ENCODE measurements at regions of chr13 and their contacts with region 1.

Region 1: GRCh38 chr13:39684531-39685137 is 29.2 kb downstream of the COG6 start:
- DNase-seq: peak in 3 of 14 experiments; percentile 40 to 51 (median 48)
- ATAC-seq: peak; percentile 37
- H3K4me3 ChIP-seq: no peak overlapping the region
- H3K4me3 Mint-ChIP-seq: no peak overlapping the region
- H3K27ac ChIP-seq: no peak overlapping the region
- H3K27ac Mint-ChIP-seq: no peak overlapping the region
- H3K4me1 ChIP-seq: no peaks in the 10 kb centered on the region
- H3K4me1 Mint-ChIP-seq: peaks cover 5% of the 10 kb centered on the region
- H3K27me3 ChIP-seq: no peaks in the 10 kb centered on the region
- H3K27me3 Mint-ChIP-seq: no peaks in the 10 kb centered on the region
- CTCF ChIP-seq: peak; percentile 71

Region 2: GRCh38 chr13:39740783-39741182 is 56.1 kb after region 1 on chr13:
- CTCF ChIA-PET with region 1: no interaction called
- POLR2A ChIA-PET with region 1: no interaction called
- intact Hi-C with region 1: no loop called
- DNase-seq: no peak
- ATAC-seq: no peak
- H3K4me3 ChIP-seq: no peak overlapping the region
- H3K4me3 Mint-ChIP-seq: no peak overlapping the region
- H3K27ac ChIP-seq: no peak overlapping the region
- H3K27ac Mint-ChIP-seq: no peak overlapping the region
- H3K4me1 ChIP-seq: no peaks in the 10 kb centered on the region
- H3K4me1 Mint-ChIP-seq: no peaks in the 10 kb centered on the region
- H3K27me3 ChIP-seq: no peaks in the 10 kb centered on the region
- H3K27me3 Mint-ChIP-seq: no peaks in the 10 kb centered on the region
- CTCF ChIP-seq: no peak

Region 3: DNA sequence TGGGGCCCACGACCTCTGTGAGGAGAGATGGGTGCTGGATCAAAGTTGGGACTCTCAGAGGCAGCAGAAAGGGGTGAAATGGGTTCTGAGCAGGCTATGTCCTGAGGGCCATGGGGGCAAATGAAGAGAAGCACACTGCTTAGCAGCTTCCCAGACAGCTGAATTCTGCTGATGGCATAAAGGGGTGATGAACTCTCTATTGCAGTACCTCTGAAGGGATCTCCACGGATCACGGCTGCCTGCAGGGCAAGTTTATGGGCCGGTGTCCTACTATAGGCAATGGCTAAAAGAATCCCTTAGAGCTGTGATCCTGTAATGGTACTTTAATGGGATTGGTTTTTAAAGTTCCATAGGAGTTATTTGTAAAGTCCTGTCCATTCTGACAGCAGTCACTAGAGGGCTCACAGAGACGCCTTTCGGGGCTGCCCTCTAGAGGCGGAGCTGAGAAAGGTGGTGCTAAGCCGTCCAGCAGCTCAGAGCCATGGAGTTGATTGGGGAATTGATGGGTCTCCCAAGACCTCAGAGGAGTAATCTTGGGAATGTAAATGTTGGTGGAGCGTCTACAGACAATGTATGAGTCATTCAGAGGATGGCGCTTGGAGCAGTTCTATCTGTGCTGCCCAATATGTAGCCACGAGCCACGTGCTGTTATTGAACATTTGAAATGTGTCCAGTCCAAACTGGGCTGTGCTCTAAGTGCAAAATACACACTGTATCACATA is 258.1 kb after region 1 on chr13:
- CTCF ChIA-PET with region 1: interaction called, 3 read pairs
- POLR2A ChIA-PET with region 1: no interaction called
- intact Hi-C with region 1: loop called in 1 of 2 experiments (anchors 5 kb)
- DNase-seq: peak; percentile 52 to 85 (median 62)
- ATAC-seq: peak; percentile 100
- H3K4me3 ChIP-seq: no peak overlapping the region
- H3K4me3 Mint-ChIP-seq: no peak overlapping the region
- H3K27ac ChIP-seq: no peak overlapping the region
- H3K27ac Mint-ChIP-seq: no peak overlapping the region
- H3K4me1 ChIP-seq: peaks cover 8% of the 10 kb centered on the region
- H3K4me1 Mint-ChIP-seq: peaks cover 10% of the 10 kb centered on the region
- H3K27me3 ChIP-seq: no peaks in the 10 kb centered on the region
- H3K27me3 Mint-ChIP-seq: no peaks in the 10 kb centered on the region
- CTCF ChIP-seq: peak; percentile 100

Region 4: DNA sequence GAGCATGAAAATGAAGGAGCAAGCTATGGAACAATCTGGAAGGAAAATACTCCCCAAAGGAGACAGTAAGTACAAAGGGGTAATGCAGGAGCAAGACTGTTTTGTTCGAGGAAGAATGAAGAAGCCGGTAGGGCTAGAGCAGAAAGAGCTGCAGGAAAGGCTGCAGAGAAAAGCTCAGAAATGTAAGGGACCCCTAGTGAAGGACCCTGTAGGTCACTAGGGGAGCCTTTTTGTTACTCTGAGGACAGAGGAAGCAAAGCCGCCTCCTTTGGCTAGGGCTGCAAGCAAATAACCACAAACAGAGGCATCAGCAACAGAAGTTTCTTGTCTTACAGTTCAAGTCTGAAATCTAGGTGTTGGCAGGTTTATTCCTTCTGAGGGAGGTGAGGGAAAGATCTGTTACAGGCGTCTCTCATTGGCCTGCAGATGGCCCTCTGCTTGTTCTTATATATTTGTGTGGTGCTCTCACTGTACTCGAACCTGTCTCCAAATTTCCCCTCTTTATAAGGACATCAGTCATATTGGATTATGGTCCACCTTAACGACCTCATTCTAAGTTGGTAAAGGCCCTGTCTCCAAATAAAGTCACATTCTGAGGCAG is 333.1 kb after region 1 on chr13:
- CTCF ChIA-PET with region 1: no interaction called
- POLR2A ChIA-PET with region 1: no interaction called
- intact Hi-C with region 1: no loop called
- DNase-seq: no peak
- ATAC-seq: no peak
- H3K4me3 ChIP-seq: no peak overlapping the region
- H3K4me3 Mint-ChIP-seq: no peak overlapping the region
- H3K27ac ChIP-seq: no peak overlapping the region
- H3K27ac Mint-ChIP-seq: no peak overlapping the region
- H3K4me1 ChIP-seq: no peaks in the 10 kb centered on the region
- H3K4me1 Mint-ChIP-seq: no peaks in the 10 kb centered on the region
- H3K27me3 ChIP-seq: no peaks in the 10 kb centered on the region
- H3K27me3 Mint-ChIP-seq: no peaks in the 10 kb centered on the region
- CTCF ChIP-seq: no peak

Region 5: GRCh38 chr13:40069173-40070044 is 384.8 kb after region 1 on chr13:
- CTCF ChIA-PET with region 1: no interaction called
- POLR2A ChIA-PET with region 1: no interaction called
- intact Hi-C with region 1: loop called in 1 of 2 experiments (anchors 5 kb)
- DNase-seq: peak; percentile 54 to 86 (median 67)
- ATAC-seq: peak; percentile 92
- H3K4me3 ChIP-seq: no peak overlapping the region
- H3K4me3 Mint-ChIP-seq: peak overlapping the region; percentile 46
- H3K27ac ChIP-seq: no peak overlapping the region
- H3K27ac Mint-ChIP-seq: peak overlapping the region; percentile 8
- H3K4me1 ChIP-seq: peaks cover 15% of the 10 kb centered on the region
- H3K4me1 Mint-ChIP-seq: peaks cover 38% of the 10 kb centered on the region
- H3K27me3 ChIP-seq: no peaks in the 10 kb centered on the region
- H3K27me3 Mint-ChIP-seq: no peaks in the 10 kb centered on the region
- CTCF ChIP-seq: peak; percentile 91

Region 6: DNA sequence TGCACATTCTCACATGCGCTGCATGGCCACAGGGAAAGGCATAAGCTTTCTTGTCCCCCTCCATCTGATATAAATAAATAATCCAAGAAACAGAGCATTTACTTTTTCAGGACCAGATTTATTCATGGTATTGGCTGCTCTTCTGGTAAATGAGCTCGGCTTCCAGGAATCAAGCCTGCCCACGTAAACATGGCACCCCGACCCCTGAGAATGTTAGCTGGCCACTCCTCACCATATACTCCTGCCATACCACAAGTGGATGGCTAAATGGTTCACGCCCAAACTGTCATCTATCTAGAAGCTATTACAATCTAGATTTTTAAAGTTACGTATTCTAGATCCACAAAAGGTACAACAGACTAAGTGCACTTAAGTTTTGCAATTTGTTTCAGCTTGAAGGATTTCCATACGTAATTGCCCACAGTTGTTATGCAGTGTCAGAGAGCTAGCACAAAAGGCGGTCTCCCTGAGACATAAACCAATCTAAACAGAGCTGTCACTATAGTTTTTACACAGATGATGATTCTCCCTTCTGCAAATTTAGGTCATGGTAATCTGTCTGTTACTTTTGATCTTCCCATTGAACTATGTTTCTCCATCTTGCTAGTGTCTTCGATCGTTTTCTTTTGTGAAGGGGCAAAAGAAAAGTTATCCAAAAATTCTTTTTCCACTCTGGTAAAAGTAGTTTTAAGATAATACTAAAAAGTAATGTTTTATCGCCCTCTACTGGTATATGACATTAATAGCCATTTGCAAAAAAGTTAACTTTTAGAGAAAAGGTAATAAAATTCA is 998.0 kb after region 1 on chr13:
- CTCF ChIA-PET with region 1: no interaction called
- POLR2A ChIA-PET with region 1: no interaction called
- intact Hi-C with region 1: loop called (anchors 1 kb)
- DNase-seq: peak in 3 of 14 experiments; percentile 39 to 57 (median 48)
- ATAC-seq: peak; percentile 52
- H3K4me3 ChIP-seq: no peak overlapping the region
- H3K4me3 Mint-ChIP-seq: no peak overlapping the region
- H3K27ac ChIP-seq: no peak overlapping the region
- H3K27ac Mint-ChIP-seq: no peak overlapping the region
- H3K4me1 ChIP-seq: no peaks in the 10 kb centered on the region
- H3K4me1 Mint-ChIP-seq: peaks cover 13% of the 10 kb centered on the region
- H3K27me3 ChIP-seq: no peaks in the 10 kb centered on the region
- H3K27me3 Mint-ChIP-seq: no peaks in the 10 kb centered on the region
- CTCF ChIP-seq: peak; percentile 89

Region 7: GRCh38 chr13:40770934-40771618 is 1086.4 kb after region 1 on chr13 and contains the start of gene MRPS31:
- CTCF ChIA-PET with region 1: no interaction called
- POLR2A ChIA-PET with region 1: no interaction called
- intact Hi-C with region 1: loop called in 1 of 2 experiments (anchors 10 kb)
- DNase-seq: peak; percentile 87 to 96 (median 94)
- ATAC-seq: peak; percentile 92
- H3K4me3 ChIP-seq: peak within 1 kb of the TSS; percentile 90
- H3K4me3 Mint-ChIP-seq: peak within 1 kb of the TSS; percentile 98
- H3K27ac ChIP-seq: peak within 1 kb of the TSS; percentile 75 to 81
- H3K27ac Mint-ChIP-seq: peak within 1 kb of the TSS; percentile 95
- H3K4me1 ChIP-seq: peaks cover 26% of the 10 kb centered on the region
- H3K4me1 Mint-ChIP-seq: peaks cover 29% of the 10 kb centered on the region
- H3K27me3 ChIP-seq: no peaks in the 10 kb centered on the region
- H3K27me3 Mint-ChIP-seq: no peaks in the 10 kb centered on the region
- CTCF ChIP-seq: peak; percentile 16
- total RNA-seq, gene MRPS31: 8.3 to 9.5 TPM

Region 8: GRCh38 chr13:40777166-40777808 is 1092.7 kb after region 1 on chr13:
- CTCF ChIA-PET with region 1: no interaction called
- POLR2A ChIA-PET with region 1: interaction called, 3 read pairs
- intact Hi-C with region 1: loop called (anchors 2 to 10 kb)
- DNase-seq: peak in 7 of 14 experiments; percentile 15 to 76 (median 45)
- ATAC-seq: peak; percentile 50
- H3K4me3 ChIP-seq: peak overlapping the region; percentile 24
- H3K4me3 Mint-ChIP-seq: peak overlapping the region; percentile 83
- H3K27ac ChIP-seq: peak overlapping the region; percentile 71 to 73
- H3K27ac Mint-ChIP-seq: peak overlapping the region; percentile 91
- H3K4me1 ChIP-seq: peaks cover 30% of the 10 kb centered on the region
- H3K4me1 Mint-ChIP-seq: peaks cover 33% of the 10 kb centered on the region
- H3K27me3 ChIP-seq: no peaks in the 10 kb centered on the region
- H3K27me3 Mint-ChIP-seq: no peaks in the 10 kb centered on the region
- CTCF ChIP-seq: peak; percentile 84